ENCODE measurements at regions of chr14 and their contacts with region 1.

Region 1: DNA sequence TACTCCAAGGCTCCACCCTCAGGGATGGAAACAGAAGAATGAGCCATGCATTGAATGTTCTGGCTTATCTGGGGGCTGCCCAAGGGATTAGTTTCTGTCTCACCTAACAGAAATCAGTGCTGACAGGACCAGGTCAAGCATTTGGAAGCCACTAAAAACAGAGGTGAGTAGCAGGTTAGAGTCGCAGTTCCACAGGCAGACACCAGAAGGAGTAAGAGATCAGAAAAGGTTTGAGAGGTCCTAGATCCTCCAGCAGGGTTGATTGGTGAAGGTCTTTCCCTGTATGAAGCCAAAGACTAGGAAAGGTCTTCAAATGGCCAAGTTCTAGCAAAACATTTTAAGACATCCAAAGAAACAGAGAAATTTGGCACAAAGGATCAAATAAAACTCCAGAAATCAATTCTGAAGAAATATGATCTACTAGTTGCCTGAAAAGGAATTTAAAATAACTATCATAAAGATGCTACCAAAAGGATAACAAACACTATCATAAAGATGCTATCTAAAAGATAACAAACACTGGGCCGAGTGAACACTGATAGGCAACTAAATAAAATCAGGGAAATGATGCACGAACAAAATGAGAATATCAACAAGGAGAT is 19.5 kb upstream of the TTC9 start:
- DNase-seq: no peak
- ATAC-seq: peak; percentile 66

Region 2: GRCh38 chr14:70416725-70417349 is 205.4 kb before region 1 on chr14 and contains the start of gene SYNJ2BP:
- intact Hi-C with region 1: no loop called
- DNase-seq: peak; percentile 80
- ATAC-seq: peak; percentile 99
- total RNA-seq, gene SYNJ2BP: 64.0 TPM

Region 3: DNA sequence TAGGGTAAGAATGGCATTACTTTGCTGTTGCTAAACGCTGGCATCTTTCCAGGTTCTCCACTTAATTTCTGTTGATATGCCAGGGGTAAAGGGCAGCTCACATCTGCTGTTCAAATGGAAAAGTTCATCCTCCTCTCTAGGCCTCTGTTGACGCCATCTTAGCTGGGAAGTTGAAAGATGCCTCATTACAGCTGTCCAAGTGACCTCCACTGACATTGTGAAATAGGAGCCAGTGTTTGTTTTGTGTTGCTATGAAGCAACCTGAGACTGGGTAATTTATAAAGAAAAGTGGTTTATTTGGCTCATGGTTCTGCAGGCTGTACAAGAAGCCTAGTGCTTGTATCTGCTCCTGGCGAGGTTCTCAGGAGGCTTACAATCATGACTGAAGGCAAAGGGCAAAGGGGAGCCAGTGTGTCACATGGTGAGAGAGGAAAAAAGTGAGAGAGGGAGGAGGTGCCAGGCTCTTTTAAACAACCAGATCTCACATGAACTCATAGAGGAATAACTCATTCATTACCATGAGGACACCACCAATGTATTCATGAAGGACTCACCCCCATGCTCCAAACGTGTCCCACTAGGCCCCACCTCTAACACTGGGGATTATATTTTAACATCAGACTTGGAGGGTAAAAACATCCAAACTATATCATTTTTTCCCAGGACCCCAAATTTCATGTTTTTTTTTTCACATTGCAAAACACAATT is 173.4 kb before region 1 on chr14:
- intact Hi-C with region 1: no loop called
- DNase-seq: no peak
- ATAC-seq: no peak

Region 4: DNA sequence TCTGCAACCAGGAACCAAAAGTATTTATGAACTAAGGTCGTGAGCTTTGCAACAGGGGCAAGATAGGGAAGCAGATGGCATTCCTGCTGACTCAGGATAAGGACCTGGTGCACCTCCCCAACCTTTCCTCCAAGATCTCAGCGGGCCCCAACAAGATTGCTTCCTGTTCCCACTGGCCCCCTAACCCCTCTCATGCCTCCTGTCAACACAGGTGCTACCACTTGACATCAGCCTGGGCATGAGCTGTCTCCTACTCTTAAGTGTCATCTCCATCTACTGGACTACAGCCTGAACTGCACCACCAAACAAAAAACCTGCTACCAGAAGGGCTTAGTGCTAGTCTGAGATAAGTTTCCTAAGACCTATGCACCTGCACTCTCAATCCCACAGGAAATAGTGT is 54.4 kb before region 1 on chr14:
- intact Hi-C with region 1: no loop called
- DNase-seq: no peak
- ATAC-seq: peak; percentile 43

Region 5: GRCh38 chr14:70714055-70714621 is 91.9 kb after region 1 on chr14:
- intact Hi-C with region 1: loop called (anchors 5 kb)
- DNase-seq: no peak
- ATAC-seq: peak; percentile 38

Region 6: GRCh38 chr14:70887207-70887681 is 265.0 kb after region 1 on chr14:
- intact Hi-C with region 1: no loop called
- DNase-seq: no peak
- ATAC-seq: no peak